Dorsolateral prefrontal cortex (tissue), 120 donors: ENCODE measurements at regions of chrX and their contacts with region 1.

Region 1: DNA sequence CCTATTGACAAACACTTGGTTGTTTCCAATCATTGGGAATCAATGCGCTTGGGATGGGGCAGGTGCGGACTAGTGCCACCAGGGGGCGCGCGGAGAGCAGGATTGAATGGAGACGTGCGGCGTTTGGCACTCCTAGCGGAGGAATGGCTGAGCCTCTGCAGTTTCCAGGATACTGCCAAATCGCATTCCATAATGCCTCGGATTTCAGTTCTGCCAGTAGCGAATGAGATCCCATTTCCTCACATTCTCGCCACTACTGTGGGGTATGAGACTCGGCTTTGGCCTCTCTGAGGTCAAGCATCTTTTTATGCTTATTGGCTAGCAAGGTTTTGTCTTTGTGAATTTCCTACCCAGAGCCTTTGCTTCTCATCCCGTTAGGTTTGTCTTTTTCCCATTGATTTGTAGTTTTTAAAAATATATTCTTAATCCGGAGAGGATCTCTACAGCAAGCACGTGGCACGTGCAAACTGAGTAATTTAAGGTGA is 28.7 kb downstream of the CLDN34 start:
- DNase-seq: peak; percentile 78 to 89 (median 86)
- H3K4me3 ChIP-seq: peak overlapping the region in 20 of 59 donors; percentile 7 to 43 (median 25)
- H3K27ac ChIP-seq: peak overlapping the region in 3 of 59 donors; percentile 1 to 36 (median 27)
- H3K27me3 ChIP-seq: peaks cover 0 to 32% (median 3%) of the 10 kb centered on the region in 45 donors
- CTCF ChIP-seq: peak; percentile 87 to 100 (median 98)

Region 2: GRCh38 chrX:9935436-9935835 is 60.5 kb before region 1 on chrX:
- intact Hi-C with region 1: no loop called
- DNase-seq: no peak
- H3K4me3 ChIP-seq: no peak overlapping the region
- H3K27ac ChIP-seq: peak overlapping the region in 5 of 59 donors; percentile 15 to 29 (median 22)
- H3K27me3 ChIP-seq: peaks cover 0 to 45% (median under 1%) of the 10 kb centered on the region in 45 donors
- CTCF ChIP-seq: peak in 1 of 56 donors; percentile 11

Region 3: DNA sequence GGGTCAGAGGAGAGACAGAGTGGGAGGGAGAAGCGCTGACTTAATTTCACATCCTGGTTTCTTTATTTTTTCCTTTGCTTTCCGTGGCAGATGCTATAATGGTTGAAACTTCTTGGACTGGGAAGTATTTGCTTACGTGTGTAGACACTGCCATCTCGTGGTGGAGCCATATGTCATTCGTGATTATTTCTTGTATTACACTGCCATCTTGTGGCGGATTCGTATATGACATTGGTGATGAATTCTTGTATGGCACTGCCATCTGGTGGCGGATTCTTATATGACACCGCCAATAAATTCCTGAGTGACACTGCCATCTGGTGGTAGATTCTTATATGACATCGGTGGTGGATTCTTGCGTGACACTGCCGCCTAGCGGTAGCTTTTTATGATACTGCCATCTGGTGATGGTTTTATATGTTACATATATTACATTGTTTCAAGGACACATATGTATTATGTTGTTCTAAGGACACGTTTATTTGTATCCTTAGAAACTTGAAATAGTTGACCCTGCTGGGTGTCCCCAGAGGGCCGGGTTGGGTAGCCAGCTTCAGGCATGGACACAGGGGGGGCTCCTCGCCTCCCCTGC is 123.6 kb after region 1 on chrX:
- intact Hi-C with region 1: loop called (anchors 1 to 2 kb)
- DNase-seq: peak in 6 of 10 donors; percentile 49 to 86 (median 68)
- H3K4me3 ChIP-seq: no peak overlapping the region
- H3K27ac ChIP-seq: peak overlapping the region in 41 of 59 donors; percentile 2 to 76 (median 46)
- H3K27me3 ChIP-seq: peaks cover 0 to 16% (median 0%) of the 10 kb centered on the region in 45 donors
- CTCF ChIP-seq: peak; percentile 99 to 100 (median 100)